ENCODE measurements at regions of chr20 and their contacts with region 1.

Region 1: GRCh38 chr20:44092551-44093248 is 94.3 kb downstream of the JPH2 start:
- DNase-seq: peak; percentile 45
- H3K4me3 ChIP-seq: no peak overlapping the region
- H3K27ac ChIP-seq: no peak overlapping the region
- H3K4me1 ChIP-seq: no peaks in the 10 kb centered on the region
- H3K27me3 ChIP-seq: peaks cover 2% of the 10 kb centered on the region in 2 experiments
- CTCF ChIP-seq: peak; percentile 47 to 52
- POLR2A ChIP-seq: no peak

Region 2: GRCh38 chr20:43448748-43449535 is 643.8 kb before region 1 on chr20:
- CTCF ChIA-PET with region 1: interaction called, 11 read pairs
- POLR2A ChIA-PET with region 1: no interaction called
- dilution Hi-C with region 1: no loop called
- intact Hi-C with region 1: loop called (anchors 1 kb)
- DNase-seq: peak; percentile 78
- H3K4me3 ChIP-seq: no peak overlapping the region
- H3K27ac ChIP-seq: no peak overlapping the region
- H3K4me1 ChIP-seq: peaks cover 7% of the 10 kb centered on the region
- H3K27me3 ChIP-seq: peaks cover 10 to 16% of the 10 kb centered on the region in 2 experiments
- CTCF ChIP-seq: peak; percentile 67 to 68
- POLR2A ChIP-seq: no peak

Region 3: GRCh38 chr20:43749734-43750294 is 342.9 kb before region 1 on chr20:
- CTCF ChIA-PET with region 1: interaction called, 9 read pairs
- POLR2A ChIA-PET with region 1: no interaction called
- dilution Hi-C with region 1: no loop called
- intact Hi-C with region 1: loop called (anchors 1 kb)
- DNase-seq: peak; percentile 37
- H3K4me3 ChIP-seq: no peak overlapping the region
- H3K27ac ChIP-seq: no peak overlapping the region
- H3K4me1 ChIP-seq: peaks cover 12% of the 10 kb centered on the region
- H3K27me3 ChIP-seq: no peaks in the 10 kb centered on the region
- CTCF ChIP-seq: peak; percentile 99
- POLR2A ChIP-seq: no peak

Region 4: GRCh38 chr20:44056010-44056698 is 36.5 kb before region 1 on chr20:
- CTCF ChIA-PET with region 1: interaction called, 8 read pairs
- POLR2A ChIA-PET with region 1: no interaction called
- dilution Hi-C with region 1: no loop called
- intact Hi-C with region 1: loop called (anchors 2 kb)
- DNase-seq: peak; percentile 26
- H3K4me3 ChIP-seq: no peak overlapping the region
- H3K27ac ChIP-seq: no peak overlapping the region
- H3K4me1 ChIP-seq: no peaks in the 10 kb centered on the region
- H3K27me3 ChIP-seq: no peaks in the 10 kb centered on the region
- CTCF ChIP-seq: peak; percentile 43 to 68
- POLR2A ChIP-seq: no peak

Measured in endothelial cell of umbilical vein (primary cell).